ENCODE measurements at regions of chr10 and their contacts with region 1.

Region 1: DNA sequence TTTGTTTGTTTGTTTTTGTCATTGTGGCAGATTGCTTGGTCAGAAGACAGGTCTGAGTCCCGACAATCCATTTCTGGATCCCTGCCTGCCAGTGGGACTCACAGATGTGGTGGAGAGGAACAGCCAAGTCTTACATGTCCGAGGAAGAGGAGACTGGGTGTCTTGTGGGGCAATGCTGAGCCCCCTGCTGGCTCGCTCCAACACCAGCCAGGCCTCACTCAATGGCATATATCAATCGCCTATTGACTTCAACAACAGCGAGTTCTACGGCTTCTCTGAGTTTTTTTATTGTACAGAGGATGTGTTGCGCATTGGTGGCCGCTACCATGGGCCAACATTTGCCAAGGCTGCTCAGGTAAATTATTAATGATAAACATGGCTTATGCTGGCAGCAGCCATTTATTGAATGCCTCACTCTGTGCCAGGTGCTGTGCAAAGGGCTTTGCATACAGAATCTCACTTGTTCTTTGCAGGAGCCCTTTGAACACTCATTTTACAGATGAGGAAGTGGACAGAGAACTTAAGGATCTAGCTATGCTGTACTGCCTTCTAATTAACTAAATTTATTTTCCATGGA is 33.3 kb downstream of the COX15 start:
- DNase-seq: no peak
- H3K4me3 Mint-ChIP-seq: no peak overlapping the region
- H3K27ac Mint-ChIP-seq: no peak overlapping the region
- H3K4me1 Mint-ChIP-seq: no peaks in the 10 kb centered on the region
- H3K27me3 Mint-ChIP-seq: no peaks in the 10 kb centered on the region
- CTCF ChIP-seq: no peak

Region 2: DNA sequence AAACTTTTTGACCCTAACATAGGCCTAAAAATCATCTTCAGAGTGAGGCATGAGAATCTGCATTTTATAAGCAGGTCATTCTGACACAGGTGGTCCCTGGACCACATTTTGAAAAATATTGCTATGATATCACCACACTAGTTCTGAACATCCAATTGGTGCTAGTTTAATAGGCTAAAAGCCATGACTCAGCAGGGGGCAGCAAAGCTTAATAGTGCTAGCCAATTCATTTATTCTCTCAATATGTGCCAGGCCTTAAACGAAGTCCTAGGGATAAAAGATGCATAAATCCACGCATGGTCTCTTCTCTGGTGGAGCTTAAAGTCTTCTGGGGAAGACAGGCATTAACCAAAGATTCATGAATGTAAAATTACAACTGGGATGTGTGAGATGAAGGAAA is 68.2 kb before region 1 on chr10:
- CTCF ChIA-PET with region 1: no interaction called
- intact Hi-C with region 1: loop called (anchors 5 kb)
- DNase-seq: peak; percentile 24
- H3K4me3 Mint-ChIP-seq: no peak overlapping the region
- H3K27ac Mint-ChIP-seq: no peak overlapping the region
- H3K4me1 Mint-ChIP-seq: no peaks in the 10 kb centered on the region
- H3K27me3 Mint-ChIP-seq: peaks cover 13% of the 10 kb centered on the region
- CTCF ChIP-seq: no peak

Measured in Calu3 (cell line).